ENCODE measurements at regions of chr6 and their contacts with region 1.

Region 1: DNA sequence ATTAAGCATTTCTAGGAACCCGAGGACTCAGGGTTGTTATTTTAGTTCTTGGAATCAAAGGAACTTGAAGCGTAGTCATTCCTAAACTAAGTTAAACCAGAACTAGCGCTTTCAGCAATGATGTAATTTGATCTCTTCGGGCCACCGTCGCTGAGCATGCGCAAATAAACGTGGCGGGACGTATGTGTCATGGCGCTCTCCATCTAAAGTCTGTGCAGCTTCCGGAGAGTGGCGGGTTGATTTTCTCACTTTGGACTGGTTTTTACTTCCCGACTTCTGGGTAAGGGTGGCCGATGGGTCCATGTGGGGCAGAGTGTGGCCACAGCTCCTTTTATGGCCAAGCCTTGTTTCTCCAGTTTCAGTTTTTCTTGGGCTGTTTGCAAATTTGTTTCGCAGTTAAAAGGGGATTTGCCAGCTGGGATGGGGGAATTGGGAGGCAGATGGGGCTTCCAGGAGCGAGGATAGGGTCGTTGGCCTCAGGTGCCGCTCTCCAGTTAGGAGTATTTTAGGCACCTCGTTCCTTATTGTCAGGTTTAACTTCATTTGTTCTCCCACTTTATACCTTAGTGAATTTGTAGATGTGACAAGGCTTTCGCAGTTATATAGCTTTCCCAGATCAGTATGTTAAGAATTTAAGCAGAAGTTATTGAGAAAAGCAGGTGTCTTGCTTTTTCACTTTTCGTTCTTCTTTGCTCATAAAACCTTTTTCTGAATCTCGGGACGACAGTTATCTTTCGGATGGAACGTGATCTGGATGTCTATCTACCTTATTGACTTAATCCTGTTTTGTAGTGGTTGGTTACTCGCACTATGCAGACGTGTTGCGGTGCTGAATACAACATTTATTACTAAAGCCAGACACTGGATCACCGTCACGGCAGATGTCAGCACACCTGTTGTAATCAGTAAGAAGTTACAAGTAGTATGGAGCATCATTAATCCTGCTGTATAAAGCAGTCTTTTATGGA is at the start of gene CDKAL1:
- DNase-seq: peak; percentile 88 to 93 (median 92)
- ATAC-seq: peak; percentile 68 to 97 (median 96)
- H3K4me3 ChIP-seq: peak within 1 kb of the TSS; percentile 53 to 84 (median 73)
- H3K27ac ChIP-seq: peak within 1 kb of the TSS; percentile 55 to 90 (median 74)
- H3K4me1 ChIP-seq: peaks cover 0 to 16% (median 6%) of the 10 kb centered on the region in 12 donors
- H3K27me3 ChIP-seq: no peaks in the 10 kb centered on the region
- CTCF ChIP-seq: no peak
- POLR2A ChIP-seq: peak in 1 of 2 donors; percentile 30
- total RNA-seq, gene CDKAL1: 7.5 to 14.3 (median 9.9) TPM

Region 2: DNA sequence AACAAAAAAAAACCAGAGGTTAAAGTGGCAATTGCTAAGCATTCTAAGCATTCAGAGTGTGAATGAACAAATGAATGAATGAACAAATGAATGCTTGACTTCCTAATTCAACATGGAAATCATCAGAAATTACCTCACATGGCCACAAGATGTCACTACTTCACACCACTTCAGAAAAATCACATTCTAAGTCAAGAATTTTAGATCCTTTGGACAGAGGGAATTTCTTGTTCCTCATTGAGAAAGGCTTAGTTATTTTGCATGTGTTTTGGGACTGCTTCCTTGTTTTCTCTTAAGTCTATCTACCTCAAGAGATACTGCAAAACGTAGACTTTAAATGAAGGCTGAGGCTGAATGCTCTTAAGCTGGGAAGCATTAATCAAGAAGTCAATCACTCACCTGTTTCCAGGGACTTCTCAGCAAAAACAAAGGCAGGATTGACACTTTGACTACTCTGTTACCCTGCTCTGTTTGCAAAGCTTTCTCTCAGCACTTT is 442.5 kb before region 1 on chr6:
- intact Hi-C with region 1: loop called in 8 of 10 experiments (anchors 2 to 10 kb)
- DNase-seq: no peak
- ATAC-seq: no peak
- H3K4me3 ChIP-seq: no peak overlapping the region
- H3K27ac ChIP-seq: no peak overlapping the region
- H3K4me1 ChIP-seq: no peaks in the 10 kb centered on the region
- H3K27me3 ChIP-seq: no peaks in the 10 kb centered on the region
- CTCF ChIP-seq: peak; percentile 65 to 82 (median 71)
- POLR2A ChIP-seq: no peak

Region 3: DNA sequence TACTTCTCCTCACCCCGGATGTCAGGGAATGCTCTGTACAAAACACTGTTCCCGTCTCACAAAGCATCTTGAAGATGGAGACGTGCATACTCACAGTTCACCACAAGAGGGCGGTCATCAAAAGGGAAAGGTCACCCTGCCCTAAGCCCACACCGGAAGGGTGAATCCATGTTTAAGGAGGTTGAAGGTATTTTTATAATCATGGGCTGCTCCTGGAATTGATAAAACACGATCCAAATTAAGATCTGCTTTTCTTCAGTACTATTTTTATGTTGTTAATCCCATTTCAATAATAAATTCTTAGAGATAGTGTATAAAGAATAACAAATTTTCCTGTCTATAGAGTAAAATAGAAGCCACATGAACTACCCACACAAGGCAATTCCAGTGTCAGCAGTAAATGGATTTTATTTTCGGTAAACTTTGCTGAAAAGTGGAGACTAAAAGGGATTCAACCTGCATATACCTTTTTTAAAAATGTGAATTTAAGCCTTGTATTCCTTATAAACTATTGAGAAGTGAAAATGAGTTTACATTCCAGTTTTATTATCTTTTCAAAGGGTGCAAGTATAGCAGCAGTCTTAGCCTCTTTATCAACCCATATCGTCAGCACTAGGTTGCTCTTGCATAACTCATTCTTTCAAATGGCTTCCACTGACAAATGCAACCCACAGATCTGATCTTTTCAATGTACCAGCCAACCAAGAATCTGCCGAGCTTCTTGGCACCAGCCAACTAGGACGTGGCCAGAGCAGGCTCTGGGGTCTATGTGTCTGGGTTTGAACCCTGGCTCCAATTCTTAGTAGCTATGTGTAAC is 242.6 kb before region 1 on chr6:
- intact Hi-C with region 1: loop called in 6 of 10 experiments (anchors 1 to 2 kb)
- DNase-seq: peak in 4 of 5 donors; percentile 64 to 76 (median 69)
- ATAC-seq: peak in 3 of 4 donors; percentile 80 to 95 (median 92)
- H3K4me3 ChIP-seq: no peak overlapping the region
- H3K27ac ChIP-seq: no peak overlapping the region
- H3K4me1 ChIP-seq: peaks cover 0 to 4% (median 0%) of the 10 kb centered on the region in 12 donors
- H3K27me3 ChIP-seq: no peaks in the 10 kb centered on the region
- CTCF ChIP-seq: peak; percentile 84 to 97 (median 92)
- POLR2A ChIP-seq: no peak

Region 4: GRCh38 chr6:20483897-20484497 is 50.6 kb before region 1 on chr6:
- intact Hi-C with region 1: no loop called
- DNase-seq: no peak
- ATAC-seq: peak in 1 of 4 donors; percentile 33
- H3K4me3 ChIP-seq: no peak overlapping the region
- H3K27ac ChIP-seq: peak overlapping the region in 1 of 12 donors; percentile 50
- H3K4me1 ChIP-seq: peaks cover 0 to 28% (median 0%) of the 10 kb centered on the region in 12 donors
- H3K27me3 ChIP-seq: no peaks in the 10 kb centered on the region
- CTCF ChIP-seq: no peak
- POLR2A ChIP-seq: no peak

Region 5: GRCh38 chr6:21157186-21157929 is 622.8 kb after region 1 on chr6:
- intact Hi-C with region 1: no loop called
- DNase-seq: no peak
- ATAC-seq: no peak
- H3K4me3 ChIP-seq: no peak overlapping the region
- H3K27ac ChIP-seq: no peak overlapping the region
- H3K4me1 ChIP-seq: peaks cover 0 to 7% (median 0%) of the 10 kb centered on the region in 12 donors
- H3K27me3 ChIP-seq: no peaks in the 10 kb centered on the region
- CTCF ChIP-seq: no peak
- POLR2A ChIP-seq: no peak

Measured in heart left ventricle (tissue), 16 donors.